ENCODE measurements at regions of chr5 and their contacts with region 1.

Region 1: GRCh38 chr5:14664302-14665100 is at the start of gene OTULIN:
- DNase-seq: peak; percentile 93
- ATAC-seq: peak; percentile 83
- H3K4me3 Mint-ChIP-seq: peak within 1 kb of the TSS; percentile 95
- H3K27ac Mint-ChIP-seq: peak within 1 kb of the TSS; percentile 97
- H3K4me1 Mint-ChIP-seq: peaks cover 68% of the 10 kb centered on the region
- H3K27me3 Mint-ChIP-seq: no peaks in the 10 kb centered on the region
- total RNA-seq, gene OTULIN: 48.0 to 48.2 TPM

Region 2: DNA sequence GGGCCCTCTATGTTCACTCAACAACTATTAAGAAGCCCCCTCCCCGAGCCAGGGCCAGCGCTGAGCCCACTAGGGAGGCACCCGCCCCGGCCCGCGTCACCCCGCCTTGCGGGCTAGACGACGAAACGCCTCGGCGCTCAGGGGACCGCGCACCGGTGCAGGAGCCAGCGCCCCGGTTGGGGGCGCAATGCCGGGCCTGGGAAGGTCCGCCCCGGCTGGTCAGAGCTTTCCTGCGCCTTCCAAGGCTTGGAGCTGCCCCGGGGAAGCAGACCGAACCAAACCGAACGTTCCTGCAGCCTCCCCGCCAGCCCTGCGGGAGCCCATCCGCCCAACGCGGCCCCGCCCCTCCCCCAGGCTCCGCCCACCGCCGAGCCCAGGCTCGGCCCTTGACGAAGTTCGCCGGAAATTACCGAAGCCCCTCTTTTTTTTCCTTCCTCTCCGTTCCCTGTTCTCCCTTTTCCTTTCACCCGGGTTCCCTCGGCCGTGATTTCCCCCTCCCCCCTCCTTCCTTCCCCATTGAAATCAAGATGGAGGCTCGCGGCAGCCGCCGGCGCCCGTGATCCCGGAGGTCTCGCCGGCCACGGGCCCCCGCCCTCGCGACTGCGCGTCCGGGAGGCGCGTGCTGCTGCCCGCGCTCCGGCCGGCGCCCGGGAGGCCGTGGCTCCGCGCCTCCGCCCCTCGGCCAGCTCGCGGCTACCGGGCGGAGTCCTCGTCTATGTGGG is 521.5 kb before region 1 on chr5 and contains the start of gene TRIO:
- CTCF ChIA-PET with region 1: no interaction called
- POLR2A ChIA-PET with region 1: no interaction called
- intact Hi-C with region 1: loop called (anchors 2 to 10 kb)
- DNase-seq: peak; percentile 88
- ATAC-seq: peak; percentile 76
- H3K4me3 Mint-ChIP-seq: peak within 1 kb of the TSS; percentile 75
- H3K27ac Mint-ChIP-seq: peak within 1 kb of the TSS; percentile 78
- H3K4me1 Mint-ChIP-seq: peaks cover 7% of the 10 kb centered on the region
- H3K27me3 Mint-ChIP-seq: peaks cover 38% of the 10 kb centered on the region
- total RNA-seq, gene TRIO: 9.2 to 11.3 TPM

Region 3: GRCh38 chr5:14581333-14581890 is 83.1 kb before region 1 on chr5 and contains the start of gene OTULINL:
- CTCF ChIA-PET with region 1: no interaction called
- POLR2A ChIA-PET with region 1: interaction called, 4 read pairs
- intact Hi-C with region 1: loop called (anchors 1 to 5 kb)
- DNase-seq: peak; percentile 93
- ATAC-seq: peak; percentile 94
- H3K4me3 Mint-ChIP-seq: peak within 1 kb of the TSS; percentile 77
- H3K27ac Mint-ChIP-seq: peak within 1 kb of the TSS; percentile 60
- H3K4me1 Mint-ChIP-seq: peaks cover 30% of the 10 kb centered on the region
- H3K27me3 Mint-ChIP-seq: peaks cover 8% of the 10 kb centered on the region
- total RNA-seq, gene OTULINL: 9.4 to 10.9 TPM

Region 4: DNA sequence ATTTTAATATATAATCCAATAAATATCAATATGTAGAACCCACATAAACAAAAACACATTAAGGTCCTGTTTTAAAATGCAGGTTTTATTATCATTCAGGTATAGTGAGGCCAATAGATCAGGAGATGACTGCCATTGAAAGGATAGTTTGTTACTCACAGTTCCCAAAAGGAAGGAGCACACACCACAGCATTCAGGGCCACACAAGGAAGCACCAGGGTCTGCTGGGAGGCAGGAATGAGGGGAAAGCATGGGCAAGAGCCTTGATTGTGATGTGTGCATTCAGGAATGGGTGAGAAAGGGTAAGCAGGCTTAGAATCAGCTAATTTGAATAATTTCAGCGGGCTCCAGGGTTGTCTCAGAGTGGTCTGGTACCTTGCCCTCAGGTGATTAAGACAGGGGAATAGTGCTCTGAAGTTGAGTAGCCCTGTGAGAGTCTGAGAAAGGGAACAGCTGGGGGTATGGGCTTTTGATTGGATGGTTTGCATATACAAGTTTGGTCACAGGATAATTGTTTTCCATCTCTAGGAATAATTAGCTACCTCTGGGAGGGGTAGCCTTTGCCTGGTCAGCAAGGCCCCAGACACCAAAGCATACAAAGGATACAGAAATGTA is 19.8 kb before region 1 on chr5:
- CTCF ChIA-PET with region 1: interaction called, 10 read pairs
- POLR2A ChIA-PET with region 1: no interaction called
- intact Hi-C with region 1: no loop called
- DNase-seq: no peak
- ATAC-seq: no peak
- H3K4me3 Mint-ChIP-seq: no peak overlapping the region
- H3K27ac Mint-ChIP-seq: no peak overlapping the region
- H3K4me1 Mint-ChIP-seq: no peaks in the 10 kb centered on the region
- H3K27me3 Mint-ChIP-seq: peaks cover 4% of the 10 kb centered on the region

Region 5: DNA sequence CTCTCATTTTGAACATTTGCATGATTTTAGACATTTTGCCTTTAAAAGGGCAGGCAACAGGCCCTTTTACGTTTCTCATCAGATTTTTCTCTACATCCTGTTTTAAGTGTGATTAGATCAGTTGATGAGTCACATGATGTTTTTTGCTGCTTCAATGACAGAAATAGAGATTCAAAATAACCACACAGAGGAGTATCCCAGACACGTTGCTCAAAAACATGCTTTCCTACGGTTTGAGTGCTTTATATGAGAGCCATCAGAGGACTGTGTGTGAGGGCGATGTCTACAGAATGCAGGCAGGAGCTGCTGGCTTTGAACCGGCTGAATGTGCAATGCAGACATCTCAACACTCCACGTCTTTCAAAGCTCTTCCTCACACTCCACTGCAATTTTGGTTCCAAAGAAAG is 42.1 kb after region 1 on chr5:
- CTCF ChIA-PET with region 1: interaction called, 3 read pairs
- POLR2A ChIA-PET with region 1: no interaction called
- intact Hi-C with region 1: loop called (anchors 1 to 2 kb)
- DNase-seq: peak; percentile 51
- ATAC-seq: peak; percentile 95
- H3K4me3 Mint-ChIP-seq: peak overlapping the region; percentile 48
- H3K27ac Mint-ChIP-seq: peak overlapping the region; percentile 98
- H3K4me1 Mint-ChIP-seq: peaks cover 83% of the 10 kb centered on the region
- H3K27me3 Mint-ChIP-seq: no peaks in the 10 kb centered on the region

Region 6: DNA sequence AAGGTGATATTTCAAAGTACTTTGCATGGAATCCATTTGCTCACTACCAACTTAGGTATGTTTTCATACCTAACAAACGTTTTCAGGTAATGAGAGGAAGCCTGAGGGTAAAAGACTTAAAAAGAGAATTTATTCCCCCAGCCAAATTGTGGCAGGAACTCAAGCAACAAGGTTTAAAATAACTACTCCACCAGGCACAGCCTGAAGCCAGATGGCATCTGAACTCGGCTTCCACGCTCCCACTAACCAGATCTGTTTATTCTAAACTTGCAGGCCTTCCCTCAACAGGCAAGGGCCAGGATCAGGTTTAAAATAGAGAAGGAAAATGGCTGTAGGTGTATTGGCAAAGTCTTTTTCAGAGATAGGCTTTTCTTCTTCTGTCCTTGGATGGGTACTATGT is 89.4 kb after region 1 on chr5:
- CTCF ChIA-PET with region 1: no interaction called
- POLR2A ChIA-PET with region 1: no interaction called
- intact Hi-C with region 1: no loop called
- DNase-seq: no peak
- ATAC-seq: no peak
- H3K4me3 Mint-ChIP-seq: no peak overlapping the region
- H3K27ac Mint-ChIP-seq: no peak overlapping the region
- H3K4me1 Mint-ChIP-seq: no peaks in the 10 kb centered on the region
- H3K27me3 Mint-ChIP-seq: no peaks in the 10 kb centered on the region

Region 7: GRCh38 chr5:14925326-14925725 is 260.8 kb after region 1 on chr5:
- CTCF ChIA-PET with region 1: no interaction called
- POLR2A ChIA-PET with region 1: no interaction called
- intact Hi-C with region 1: loop called in 1 of 2 experiments (anchors 5 kb)
- DNase-seq: no peak
- ATAC-seq: peak; percentile 19
- H3K4me3 Mint-ChIP-seq: peak overlapping the region; percentile 42
- H3K27ac Mint-ChIP-seq: peak overlapping the region; percentile 89
- H3K4me1 Mint-ChIP-seq: peaks cover 60% of the 10 kb centered on the region
- H3K27me3 Mint-ChIP-seq: no peaks in the 10 kb centered on the region

Region 8: DNA sequence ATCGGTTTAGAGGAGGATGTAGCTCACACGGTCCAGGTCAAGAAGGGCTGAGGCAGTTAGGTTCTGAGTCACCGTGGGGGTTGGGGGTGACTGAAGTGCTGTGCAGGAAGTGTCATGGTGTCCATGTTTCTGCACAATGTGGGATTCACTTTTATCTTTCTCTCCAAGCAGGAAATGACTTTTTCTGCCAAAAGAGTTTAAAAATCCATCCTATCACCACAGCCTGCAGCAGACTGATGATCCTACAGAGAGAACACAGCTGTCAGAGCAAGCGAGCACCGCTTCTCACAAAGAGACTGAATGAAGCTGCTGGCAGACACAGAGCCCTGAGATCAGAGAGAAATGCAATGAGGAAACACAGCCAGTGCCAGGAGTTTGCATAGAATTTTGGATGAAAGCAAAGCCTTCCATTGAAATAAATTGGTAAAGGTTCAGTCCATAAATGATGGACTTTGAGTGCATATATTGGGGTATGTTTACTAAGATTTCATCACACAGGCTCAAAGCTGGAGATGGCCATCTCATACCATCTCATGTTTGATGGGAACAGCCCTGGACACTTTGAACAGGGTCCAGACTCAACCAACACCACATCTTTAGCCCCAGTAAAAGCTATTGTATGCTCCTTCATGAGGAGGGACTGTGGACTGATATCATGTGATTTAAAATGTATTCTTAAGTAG is 621.5 kb after region 1 on chr5:
- CTCF ChIA-PET with region 1: no interaction called
- POLR2A ChIA-PET with region 1: no interaction called
- intact Hi-C with region 1: no loop called
- DNase-seq: no peak
- ATAC-seq: no peak
- H3K4me3 Mint-ChIP-seq: no peak overlapping the region
- H3K27ac Mint-ChIP-seq: no peak overlapping the region
- H3K4me1 Mint-ChIP-seq: no peaks in the 10 kb centered on the region
- H3K27me3 Mint-ChIP-seq: no peaks in the 10 kb centered on the region

Measured in activated CD4-positive, alpha-beta T cell treated with anti-CD3 and anti-CD28 coated beads for 36 hours (primary cell).